HEK293T (cell line): ENCODE measurements at regions of chr14 and their contacts with region 1.

Region 1: GRCh38 chr14:76260749-76261148 is 109.0 kb downstream of the GPATCH2L start:
- DNase-seq: no peak

Region 2: DNA sequence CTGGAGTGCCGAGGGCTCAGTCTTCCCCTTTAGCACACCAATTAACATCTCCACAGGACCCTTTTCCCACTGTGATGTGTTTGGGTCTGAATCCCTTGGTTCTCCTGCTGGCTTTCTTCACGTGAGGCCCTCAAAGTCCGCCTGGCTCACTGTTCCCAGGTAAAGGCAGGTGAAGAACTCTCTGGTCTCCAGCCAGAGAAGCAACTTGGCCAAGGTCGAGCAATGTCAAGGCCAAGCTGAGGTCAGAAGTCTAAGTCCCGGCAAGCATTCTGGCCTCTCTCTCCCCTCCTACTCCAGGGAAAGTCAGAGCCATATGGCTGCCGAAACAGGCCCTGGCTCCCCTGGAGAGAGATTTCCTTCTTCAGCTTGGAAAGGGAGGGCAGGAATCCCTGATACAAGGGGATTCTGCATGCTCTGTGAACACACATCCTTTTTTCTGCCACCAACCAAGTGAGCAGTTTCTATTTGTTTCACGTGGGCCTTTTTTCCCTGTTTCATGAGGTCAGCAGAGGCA is 53.8 kb after region 1 on chr14:
- CTCF ChIA-PET with region 1: interaction called, 10 read pairs
- POLR2A ChIA-PET with region 1: no interaction called
- DNase-seq: no peak

Region 3: DNA sequence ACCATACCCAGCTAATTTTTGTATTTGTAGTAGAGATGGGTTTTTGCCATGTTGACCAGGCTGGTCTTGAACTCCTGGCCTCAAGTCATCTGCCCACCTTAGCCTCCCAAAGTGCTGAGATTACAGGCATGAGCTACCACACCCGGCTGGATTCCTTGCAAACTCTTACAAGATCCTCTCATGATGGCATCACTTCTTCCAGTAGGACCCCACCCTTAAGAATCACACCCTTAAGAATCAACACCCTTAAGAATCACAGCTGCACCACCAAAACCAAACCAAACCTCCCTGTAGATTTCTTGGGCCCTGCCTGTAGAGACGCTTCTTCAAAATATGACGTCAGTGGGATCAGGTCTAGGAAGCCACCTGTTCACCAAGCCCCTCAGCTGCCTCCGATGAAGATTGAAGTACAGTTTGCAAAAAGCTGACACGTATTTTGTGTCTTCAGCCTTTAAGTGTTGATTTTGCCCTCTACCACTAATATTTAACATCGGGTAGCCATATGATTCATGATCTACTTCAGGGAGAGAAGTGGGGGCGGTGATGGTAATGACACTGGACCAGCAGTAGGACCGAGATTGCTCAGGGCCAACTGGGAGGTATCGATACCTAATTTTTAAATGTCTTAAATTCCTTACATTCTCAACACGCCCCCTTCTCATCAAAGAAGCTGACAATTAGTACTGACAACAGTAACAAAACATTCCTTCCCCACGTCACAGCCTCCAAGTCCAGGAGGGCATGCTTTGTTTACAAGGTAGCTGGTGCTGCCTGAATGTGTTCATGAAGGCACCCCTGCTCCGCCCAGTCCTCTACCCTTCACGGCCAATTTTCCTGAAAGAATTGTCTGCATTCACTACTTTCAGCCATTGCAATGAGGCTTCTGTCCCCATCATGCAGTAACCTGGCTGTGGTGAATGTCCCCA is 172.3 kb after region 1 on chr14:
- CTCF ChIA-PET with region 1: no interaction called
- POLR2A ChIA-PET with region 1: no interaction called
- DNase-seq: no peak